Tibial artery (tissue), 4 donors: ENCODE measurements at regions of chr17 and their contacts with region 1.

Region 1: DNA sequence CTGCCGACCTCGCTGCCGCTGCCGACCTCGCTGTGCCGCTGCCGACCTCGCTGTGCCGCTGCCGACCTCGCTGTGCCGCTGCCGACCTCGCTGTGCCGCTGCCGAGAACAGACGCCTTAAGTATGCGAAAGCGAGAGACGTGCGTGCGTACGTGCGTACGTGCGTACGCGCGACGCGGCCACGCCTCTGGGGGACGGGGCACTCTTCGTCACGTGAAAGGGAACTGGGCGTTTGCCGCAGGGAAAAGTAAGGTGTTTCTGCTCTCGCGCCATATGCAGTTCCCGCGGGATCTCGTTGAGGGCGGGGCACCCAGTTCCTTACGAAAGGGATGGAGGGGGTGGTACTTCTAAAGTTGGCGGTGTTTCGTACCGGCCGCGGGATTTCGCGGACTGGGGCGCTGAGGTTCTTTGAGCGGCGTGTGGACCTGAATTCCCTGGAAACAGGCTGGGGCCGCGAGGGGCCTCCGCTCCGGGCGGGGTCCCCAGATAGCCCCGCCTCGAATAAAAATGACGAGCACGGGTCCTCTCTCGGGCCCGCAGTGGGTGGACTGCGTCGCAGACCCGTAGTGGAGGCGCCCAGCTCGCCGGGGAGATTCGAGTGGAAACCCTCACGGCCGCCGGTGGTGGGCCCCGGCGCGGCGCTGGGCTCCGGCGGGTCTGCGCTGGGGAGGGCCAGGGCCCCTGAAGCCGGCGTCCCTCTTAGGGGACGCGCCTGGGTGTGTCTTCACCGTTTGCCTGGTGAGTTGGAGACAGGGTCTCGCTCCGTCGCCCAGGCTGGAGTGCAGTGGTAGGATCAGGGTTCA is at the start of gene EIF4A3:
- DNase-seq: peak; percentile 98 to 99
- H3K4me3 ChIP-seq: peak within 1 kb of the TSS; percentile 78
- H3K27ac ChIP-seq: peak within 1 kb of the TSS; percentile 88 to 91
- H3K4me1 ChIP-seq: peaks cover 0 to 31% (median 25%) of the 10 kb centered on the region in 4 donors
- H3K27me3 ChIP-seq: no peaks in the 10 kb centered on the region
- CTCF ChIP-seq: no peak

Region 2: GRCh38 chr17:79796763-79797491 is 350.3 kb before region 1 on chr17 and contains the start of gene CBX8:
- intact Hi-C with region 1: loop called (anchors 5 kb)
- DNase-seq: peak; percentile 98 to 99
- H3K4me3 ChIP-seq: peak within 1 kb of the TSS; percentile 59 to 63
- H3K27ac ChIP-seq: peak within 1 kb of the TSS; percentile 67 to 73
- H3K4me1 ChIP-seq: peaks cover 0 to 76% (median 60%) of the 10 kb centered on the region in 4 donors
- H3K27me3 ChIP-seq: peaks cover 29 to 75% of the 10 kb centered on the region in 2 donors
- CTCF ChIP-seq: peak in 1 of 2 experiments; percentile 21

Region 3: DNA sequence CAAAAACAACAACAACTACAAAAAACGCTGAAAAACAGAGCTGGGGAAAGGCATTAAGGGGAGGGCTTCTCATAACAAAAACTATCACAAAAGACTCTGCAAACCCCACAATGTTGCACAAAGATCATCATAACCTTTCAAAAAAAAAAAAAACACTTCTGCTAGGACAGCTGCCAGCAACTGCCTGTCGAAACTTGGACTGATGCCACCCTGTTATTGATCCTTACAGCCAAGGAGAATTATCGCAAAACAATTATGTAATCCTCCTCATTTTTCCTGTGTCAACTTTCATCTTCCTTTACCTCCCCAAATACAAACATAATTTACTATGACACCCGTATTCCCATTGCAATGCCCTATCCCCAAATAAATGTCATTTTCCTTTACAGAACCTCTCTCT is 101.5 kb before region 1 on chr17:
- intact Hi-C with region 1: no loop called
- DNase-seq: no peak
- H3K4me3 ChIP-seq: no peak overlapping the region
- H3K27ac ChIP-seq: no peak overlapping the region
- H3K4me1 ChIP-seq: no peaks in the 10 kb centered on the region
- H3K27me3 ChIP-seq: no peaks in the 10 kb centered on the region
- CTCF ChIP-seq: no peak

Region 4: GRCh38 chr17:80177986-80178590 is 30.9 kb after region 1 on chr17:
- intact Hi-C with region 1: no loop called
- DNase-seq: no peak
- H3K4me3 ChIP-seq: no peak overlapping the region
- H3K27ac ChIP-seq: no peak overlapping the region
- H3K4me1 ChIP-seq: no peaks in the 10 kb centered on the region
- H3K27me3 ChIP-seq: peaks cover 0 to 45% of the 10 kb centered on the region in 2 donors
- CTCF ChIP-seq: no peak

Region 5: DNA sequence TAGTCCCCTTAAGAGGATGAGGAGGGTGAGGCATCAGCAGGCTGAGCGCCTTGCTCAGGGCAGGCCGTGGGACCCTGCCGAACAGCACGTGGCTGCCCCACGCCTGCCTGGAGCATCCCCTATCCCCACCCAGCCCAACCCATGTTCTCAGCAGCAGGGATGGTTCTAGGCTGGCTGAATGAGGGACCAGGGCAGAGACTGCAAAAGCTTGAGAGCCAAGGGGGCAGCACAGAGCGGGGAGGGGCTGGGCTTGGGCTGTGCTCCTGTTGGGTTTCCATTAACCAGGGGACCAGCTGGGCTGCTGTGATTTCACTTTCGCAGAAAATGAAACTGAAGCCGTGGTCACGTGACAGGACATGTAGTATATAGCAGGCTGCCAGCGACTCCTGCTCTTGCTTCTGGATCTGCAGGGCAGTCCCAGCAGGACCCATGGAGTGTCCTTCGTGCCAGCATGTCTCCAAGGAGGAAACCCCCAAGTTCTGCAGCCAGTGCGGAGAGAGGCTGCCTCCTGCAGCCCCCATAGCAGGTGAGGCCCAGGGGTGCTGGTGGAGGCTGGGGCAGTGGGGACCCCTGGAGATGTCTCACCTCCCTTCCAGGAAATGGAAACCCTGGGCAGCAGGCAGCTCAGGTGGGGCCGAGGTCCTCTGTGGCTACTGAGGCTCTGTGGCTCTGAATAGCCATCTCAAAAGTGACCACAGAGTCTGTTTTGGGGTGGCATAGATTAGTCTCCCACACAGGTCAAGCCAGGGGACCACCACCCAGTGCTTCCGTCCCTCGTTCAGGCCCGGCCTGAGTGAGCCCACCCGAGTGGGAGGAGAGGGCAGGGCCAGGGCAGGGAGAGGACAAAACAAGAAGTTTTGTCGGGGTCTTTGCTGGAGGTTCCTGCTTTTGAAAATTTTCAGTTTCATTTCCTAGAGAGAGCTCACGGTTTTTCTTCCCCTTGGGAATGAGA is 116.3 kb after region 1 on chr17:
- intact Hi-C with region 1: loop called (anchors 5 kb)
- DNase-seq: peak; percentile 87 to 90
- H3K4me3 ChIP-seq: peak overlapping the region; percentile 30 to 47
- H3K27ac ChIP-seq: peak overlapping the region; percentile 39 to 99
- H3K4me1 ChIP-seq: peaks cover 0 to 39% (median 30%) of the 10 kb centered on the region in 4 donors
- H3K27me3 ChIP-seq: no peaks in the 10 kb centered on the region
- CTCF ChIP-seq: no peak